ENCODE measurements at regions of chr3 and their contacts with region 1.

Region 1: GRCh38 chr3:113745273-113746068 is 578 bp downstream of the NAA50 start:
- DNase-seq: peak; percentile 88
- H3K4me3 ChIP-seq: peak overlapping the region; percentile 75 to 84 (median 78)
- H3K27ac ChIP-seq: peak overlapping the region; percentile 94 to 98 (median 97)
- H3K4me1 ChIP-seq: peaks cover 0 to 67% (median 34%) of the 10 kb centered on the region in 4 donors
- H3K27me3 ChIP-seq: no peaks in the 10 kb centered on the region
- CTCF ChIP-seq: peak; percentile 52 to 65 (median 59)
- EP300 ChIP-seq: no peak
- POLR2A ChIP-seq: peak in 1 of 2 donors; percentile 6

Region 2: DNA sequence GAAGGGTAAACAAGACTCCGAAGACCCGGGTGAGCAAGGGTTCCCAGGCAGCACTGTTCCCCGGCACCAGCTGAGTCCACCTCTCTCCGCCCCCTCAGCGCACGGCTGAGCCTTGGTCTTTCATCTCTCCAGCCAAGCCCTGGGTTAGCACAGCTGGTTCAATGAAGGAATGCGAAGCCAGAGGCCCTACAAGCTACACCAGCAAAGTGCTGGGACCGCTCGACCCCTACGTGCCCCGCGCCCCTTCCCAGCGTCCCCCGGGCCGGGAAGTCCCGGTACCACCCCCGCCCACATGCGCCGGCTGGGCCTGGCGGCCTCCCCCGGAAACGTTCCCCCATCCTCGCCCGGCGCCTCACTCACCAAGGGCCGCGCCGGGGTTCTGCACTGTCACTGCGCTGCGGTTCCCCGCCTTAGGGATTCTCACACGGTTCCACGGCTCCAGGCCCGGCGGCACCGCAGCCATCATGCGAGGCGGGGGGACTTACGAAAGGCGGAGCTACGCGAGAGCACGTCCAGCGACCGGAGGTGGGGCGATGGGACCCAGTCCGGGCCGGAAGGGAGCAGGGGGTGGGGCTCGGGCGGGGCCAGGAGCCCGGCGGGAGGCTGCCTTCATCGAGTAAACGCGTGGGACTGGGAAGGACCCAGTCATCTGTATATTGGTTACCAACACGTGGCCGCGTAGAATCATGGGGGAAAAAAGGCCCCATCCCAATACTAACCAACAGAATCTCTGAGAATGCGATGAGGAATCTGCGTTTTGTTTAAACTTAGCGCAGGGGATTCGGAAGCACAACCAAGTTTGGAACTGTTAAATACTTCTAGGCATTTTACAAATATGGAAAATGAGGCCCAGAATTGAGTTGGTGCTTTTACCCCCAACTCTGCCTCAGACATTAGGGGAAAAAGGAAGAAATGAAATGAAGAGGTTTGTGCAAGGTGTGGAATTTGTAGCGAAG is 726.0 kb before region 1 on chr3:
- intact Hi-C with region 1: loop called (anchors 5 kb)
- DNase-seq: peak; percentile 96
- H3K4me3 ChIP-seq: peak overlapping the region; percentile 76 to 93 (median 83)
- H3K27ac ChIP-seq: peak overlapping the region; percentile 92 to 97 (median 96)
- H3K4me1 ChIP-seq: peaks cover 0 to 23% (median 16%) of the 10 kb centered on the region in 4 donors
- H3K27me3 ChIP-seq: no peaks in the 10 kb centered on the region
- CTCF ChIP-seq: no peak
- EP300 ChIP-seq: no peak
- POLR2A ChIP-seq: peak; percentile 38

Region 3: GRCh38 chr3:113151461-113152031 is 593.9 kb before region 1 on chr3:
- intact Hi-C with region 1: loop called (anchors 10 kb)
- DNase-seq: peak; percentile 93
- H3K4me3 ChIP-seq: no peak overlapping the region
- H3K27ac ChIP-seq: peak overlapping the region; percentile 73 to 88 (median 82)
- H3K4me1 ChIP-seq: peaks cover 0 to 81% (median 72%) of the 10 kb centered on the region in 4 donors
- H3K27me3 ChIP-seq: no peaks in the 10 kb centered on the region
- CTCF ChIP-seq: no peak
- EP300 ChIP-seq: peak in 1 of 4 donors; percentile 30
- POLR2A ChIP-seq: no peak

Region 4: GRCh38 chr3:113354307-113354706 is 391.2 kb before region 1 on chr3:
- intact Hi-C with region 1: no loop called
- DNase-seq: no peak
- H3K4me3 ChIP-seq: no peak overlapping the region
- H3K27ac ChIP-seq: no peak overlapping the region
- H3K4me1 ChIP-seq: no peaks in the 10 kb centered on the region
- H3K27me3 ChIP-seq: no peaks in the 10 kb centered on the region
- CTCF ChIP-seq: no peak
- EP300 ChIP-seq: no peak
- POLR2A ChIP-seq: no peak

Region 5: DNA sequence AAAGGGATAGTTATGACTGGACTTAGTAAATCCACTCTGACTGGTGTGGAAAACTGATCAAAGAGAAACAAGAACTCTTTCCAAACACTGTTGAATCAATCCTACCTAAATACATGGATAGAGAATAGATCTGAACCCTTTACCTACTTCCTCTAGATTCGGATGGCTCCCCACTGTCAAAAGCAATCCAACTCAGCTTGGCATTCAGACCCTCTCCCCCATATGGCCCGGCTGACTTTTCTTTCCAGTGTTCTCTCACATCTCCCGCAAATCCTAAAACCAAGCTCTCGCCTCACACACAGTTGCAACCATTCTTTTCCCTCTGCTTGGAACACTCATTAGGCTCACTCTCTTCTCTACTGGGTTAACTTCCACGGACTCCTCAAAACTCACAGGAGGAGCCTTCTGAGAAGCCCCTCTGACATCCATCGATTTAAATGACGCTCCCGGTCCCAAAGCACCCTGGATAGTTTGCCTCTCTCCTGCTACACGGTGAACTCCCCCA is 231.2 kb before region 1 on chr3:
- intact Hi-C with region 1: loop called (anchors 5 kb)
- DNase-seq: no peak
- H3K4me3 ChIP-seq: peak overlapping the region; percentile 72 to 93 (median 88)
- H3K27ac ChIP-seq: peak overlapping the region; percentile 87 to 95 (median 92)
- H3K4me1 ChIP-seq: peaks cover 0 to 19% (median 16%) of the 10 kb centered on the region in 4 donors
- H3K27me3 ChIP-seq: no peaks in the 10 kb centered on the region
- CTCF ChIP-seq: no peak
- EP300 ChIP-seq: no peak
- POLR2A ChIP-seq: no peak

Region 6: GRCh38 chr3:113614402-113614801 is 131.1 kb before region 1 on chr3:
- intact Hi-C with region 1: no loop called
- DNase-seq: peak; percentile 67
- H3K4me3 ChIP-seq: no peak overlapping the region
- H3K27ac ChIP-seq: peak overlapping the region in 1 of 4 donors; percentile 26
- H3K4me1 ChIP-seq: peaks cover 0 to 16% (median 4%) of the 10 kb centered on the region in 4 donors
- H3K27me3 ChIP-seq: no peaks in the 10 kb centered on the region
- CTCF ChIP-seq: no peak
- EP300 ChIP-seq: no peak
- POLR2A ChIP-seq: no peak

Region 7: DNA sequence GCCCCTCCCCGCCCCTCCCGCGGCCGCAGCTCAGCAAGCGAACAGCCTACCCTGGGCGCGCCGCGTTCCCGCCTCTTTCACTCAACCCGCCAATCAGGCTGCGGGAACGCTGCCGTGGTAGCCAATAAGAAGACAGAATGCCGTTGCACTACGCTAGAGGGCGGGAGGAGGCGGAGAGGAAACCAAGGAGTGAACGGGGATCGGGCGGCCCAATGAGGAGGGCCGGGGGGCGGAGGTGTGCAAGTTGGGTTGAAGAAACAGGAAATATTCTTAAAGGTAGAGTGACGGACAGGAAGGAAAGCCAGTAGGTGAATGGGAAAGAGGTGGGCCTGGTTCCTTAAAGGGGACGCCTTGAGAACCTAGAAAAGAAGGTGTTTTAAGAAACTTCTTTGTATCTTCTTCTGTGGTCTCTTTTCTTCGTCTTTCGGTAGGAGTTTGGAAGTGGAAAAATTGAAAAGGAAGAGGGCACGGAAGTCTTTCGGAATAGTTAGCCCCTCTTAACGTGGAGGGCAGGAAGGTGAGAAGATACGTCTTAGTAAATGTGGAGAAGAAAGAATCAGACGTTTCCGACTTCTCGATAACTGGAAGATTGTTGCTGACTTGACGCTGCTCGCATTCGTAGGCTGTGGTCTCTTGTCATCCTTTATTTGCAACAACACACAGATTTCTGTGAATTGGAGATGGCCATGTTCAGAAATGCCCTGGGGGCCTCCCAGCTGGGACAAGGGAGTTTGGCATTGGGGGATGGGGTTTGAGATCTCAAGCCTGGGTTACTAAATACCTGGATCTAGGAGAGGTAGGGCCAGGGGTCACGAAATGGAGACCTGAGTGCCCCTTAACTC is 48.6 kb before region 1 on chr3:
- intact Hi-C with region 1: loop called (anchors 2 kb)
- DNase-seq: peak; percentile 100
- H3K4me3 ChIP-seq: peak overlapping the region; percentile 91 to 100 (median 98)
- H3K27ac ChIP-seq: peak overlapping the region; percentile 99 to 100 (median 100)
- H3K4me1 ChIP-seq: peaks cover 0 to 39% (median 27%) of the 10 kb centered on the region in 4 donors
- H3K27me3 ChIP-seq: no peaks in the 10 kb centered on the region
- CTCF ChIP-seq: no peak
- EP300 ChIP-seq: no peak
- POLR2A ChIP-seq: no peak